Activated T-helper 1 cell treated with anti-CD3 and anti-CD28 coated beads, Interleukin-12 subunit alpha, Interleukin-12 subunit beta, Interleukin-2, Interleukin-4 antibody, amounts not matched to agents 30 ng/mL and 10 ng/mL and 1 ng/mL, durations not matched to agents 14 hours and 24 hours and 36 hours (primary cell): ENCODE measurements at regions of chr4 and their contacts with region 1.

Region 1: GRCh38 chr4:2135083-2135482 is 76.0 kb downstream of the NAT8L start:
- DNase-seq: peak; percentile 41
- H3K4me3 Mint-ChIP-seq: no peak overlapping the region
- H3K27ac Mint-ChIP-seq: peak overlapping the region; percentile 14
- H3K4me1 Mint-ChIP-seq: peaks cover 33% of the 10 kb centered on the region
- H3K27me3 Mint-ChIP-seq: peaks cover 5% of the 10 kb centered on the region

Region 2: GRCh38 chr4:2172161-2172560 is 37.1 kb after region 1 on chr4:
- intact Hi-C with region 1: loop called (anchors 2 kb)
- DNase-seq: peak; percentile 58
- H3K4me3 Mint-ChIP-seq: peak overlapping the region; percentile 61
- H3K27ac Mint-ChIP-seq: peak overlapping the region; percentile 86
- H3K4me1 Mint-ChIP-seq: peaks cover 80% of the 10 kb centered on the region
- H3K27me3 Mint-ChIP-seq: no peaks in the 10 kb centered on the region

Region 3: GRCh38 chr4:2441393-2442174 is 306.5 kb after region 1 on chr4:
- intact Hi-C with region 1: no loop called
- DNase-seq: peak; percentile 55
- H3K4me3 Mint-ChIP-seq: no peak overlapping the region
- H3K27ac Mint-ChIP-seq: no peak overlapping the region
- H3K4me1 Mint-ChIP-seq: no peaks in the 10 kb centered on the region
- H3K27me3 Mint-ChIP-seq: peaks cover 2% of the 10 kb centered on the region